ENCODE measurements at regions of chr10 and their contacts with region 1.

Region 1: GRCh38 chr10:111598436-111599059 is 521.7 kb downstream of the ADRA2A start:
- H3K4me3 Mint-ChIP-seq: no peak overlapping the region
- H3K27ac Mint-ChIP-seq: no peak overlapping the region
- H3K4me1 Mint-ChIP-seq: no peaks in the 10 kb centered on the region
- H3K27me3 Mint-ChIP-seq: no peaks in the 10 kb centered on the region

Region 2: DNA sequence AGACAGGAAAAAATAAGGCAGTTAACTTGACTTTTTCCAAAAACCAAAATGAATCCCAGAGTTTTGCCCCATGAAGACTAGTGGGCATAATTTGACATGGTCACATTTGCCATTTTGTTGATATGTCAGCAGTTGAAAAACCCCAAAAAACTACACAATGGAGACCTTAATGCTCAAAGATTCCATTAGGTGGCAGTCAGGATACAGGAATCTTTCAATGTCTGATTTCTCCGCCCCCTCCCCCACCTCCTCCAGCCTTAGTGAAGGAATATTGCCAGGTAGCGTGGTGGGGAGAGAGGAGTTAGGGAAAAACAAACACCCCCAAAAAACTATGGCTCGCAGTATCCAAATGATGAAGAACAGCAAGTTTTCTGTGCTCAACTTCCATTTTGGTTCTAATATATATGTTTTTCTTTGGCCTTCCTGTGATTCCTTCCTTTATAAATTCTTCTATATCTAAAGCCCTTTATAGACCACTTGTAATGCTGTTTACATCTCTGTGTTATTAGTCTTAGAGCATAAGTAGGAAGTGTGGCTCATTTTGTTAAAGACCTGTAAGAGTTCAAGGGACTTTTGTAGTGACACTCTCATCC is 1287.1 kb before region 1 on chr10:
- intact Hi-C with region 1: loop called (anchors 5 kb)
- H3K4me3 Mint-ChIP-seq: no peak overlapping the region
- H3K27ac Mint-ChIP-seq: no peak overlapping the region
- H3K4me1 Mint-ChIP-seq: peaks cover 11% of the 10 kb centered on the region
- H3K27me3 Mint-ChIP-seq: peaks cover 8% of the 10 kb centered on the region

Region 3: DNA sequence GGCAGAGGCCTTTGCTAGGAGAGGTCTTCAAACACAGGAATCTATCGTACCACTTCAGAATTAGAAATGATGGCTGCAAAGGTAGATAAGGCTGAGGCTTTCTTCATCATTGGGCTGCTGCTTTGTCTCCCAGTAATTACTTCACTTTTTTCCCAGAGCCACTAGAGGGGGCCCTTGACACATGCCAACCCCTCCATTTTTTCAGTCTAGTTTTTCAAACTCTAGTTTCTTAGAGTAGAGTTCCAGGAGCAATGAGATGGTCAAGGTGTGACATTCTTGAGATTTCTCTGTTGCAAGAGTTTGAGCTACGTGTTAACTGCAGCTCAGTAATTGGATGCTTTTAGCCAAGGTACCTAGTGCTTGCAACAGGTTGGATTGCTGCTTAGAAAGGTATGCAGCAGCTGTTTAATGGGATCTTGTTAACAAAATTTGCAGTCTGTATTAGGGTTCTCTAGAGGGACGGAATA is 988.2 kb before region 1 on chr10:
- intact Hi-C with region 1: loop called (anchors 2 kb)
- H3K4me3 Mint-ChIP-seq: no peak overlapping the region
- H3K27ac Mint-ChIP-seq: no peak overlapping the region
- H3K4me1 Mint-ChIP-seq: peaks cover 7% of the 10 kb centered on the region
- H3K27me3 Mint-ChIP-seq: no peaks in the 10 kb centered on the region

Region 4: DNA sequence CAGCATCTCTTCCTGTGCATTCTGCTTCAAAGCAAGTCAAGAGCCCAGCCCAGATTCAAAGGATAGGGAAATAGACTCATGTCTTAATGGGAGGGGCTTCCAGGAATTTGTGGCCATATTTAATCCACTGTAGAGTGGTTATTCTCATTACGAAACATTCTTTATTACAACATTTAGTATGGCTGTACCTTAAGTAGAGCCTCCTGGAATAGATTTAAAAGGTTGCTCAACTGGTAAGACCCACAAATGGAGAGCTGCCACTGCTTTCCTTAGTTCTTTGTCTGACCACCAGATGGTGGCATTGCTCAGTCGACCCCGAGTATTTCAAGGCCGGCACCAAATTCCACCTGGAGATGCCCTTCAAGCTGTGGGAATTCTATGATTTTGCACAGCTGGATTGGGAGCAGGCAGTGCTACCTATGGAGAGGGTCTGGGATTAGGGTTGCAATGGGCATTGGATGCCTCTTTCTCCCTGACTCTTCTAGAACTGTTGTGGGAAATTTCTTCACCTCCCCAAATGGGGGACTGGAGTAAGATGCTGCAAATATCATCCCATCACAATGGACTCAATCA is 852.2 kb before region 1 on chr10:
- intact Hi-C with region 1: loop called (anchors 5 kb)
- H3K4me3 Mint-ChIP-seq: no peak overlapping the region
- H3K27ac Mint-ChIP-seq: no peak overlapping the region
- H3K4me1 Mint-ChIP-seq: peaks cover 9% of the 10 kb centered on the region
- H3K27me3 Mint-ChIP-seq: no peaks in the 10 kb centered on the region